Posterior cingulate gyrus (tissue), 11 donors: ENCODE measurements at regions of chr18 and their contacts with region 1.

Region 1: DNA sequence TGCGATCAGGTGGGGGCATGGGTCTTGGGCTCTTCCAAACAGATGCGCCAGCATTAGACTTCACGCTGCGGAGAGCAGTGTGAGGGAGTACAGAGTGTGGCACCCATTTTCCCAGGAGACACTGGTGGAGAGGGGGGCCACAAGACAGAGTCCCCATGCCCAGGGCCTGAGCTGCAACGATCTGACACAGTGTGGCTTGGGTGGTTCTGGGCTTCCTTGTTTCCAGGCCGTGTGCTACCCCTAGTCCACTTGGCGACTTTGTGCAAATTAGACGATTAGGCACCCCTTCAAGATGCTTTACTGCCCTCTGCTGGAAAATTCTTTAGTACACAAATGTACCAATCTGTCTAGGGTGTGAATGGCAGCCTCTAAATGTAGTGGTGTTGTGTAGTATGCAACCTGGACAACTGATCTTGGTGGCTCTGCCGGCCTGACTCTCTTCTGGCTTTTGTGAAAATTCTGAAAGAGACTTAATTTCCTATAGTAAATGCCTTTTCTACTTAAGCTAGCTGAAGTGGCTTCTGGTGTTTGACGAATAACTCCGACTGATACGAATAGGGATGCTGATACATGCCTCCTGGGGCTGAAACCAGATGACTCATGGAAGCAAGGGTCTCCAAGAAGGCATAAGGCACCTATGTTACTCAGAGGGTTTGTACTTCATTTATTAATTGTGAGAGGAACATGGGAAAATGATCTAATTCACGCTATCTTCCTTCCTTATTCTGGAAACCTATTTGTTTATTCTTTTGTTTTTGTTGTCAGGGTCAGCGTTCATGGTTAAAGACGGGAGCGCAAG is 92.3 kb upstream of the SMAD2 start:
- DNase-seq: peak in 1 of 10 donors; percentile 42

Region 2: GRCh38 chr18:47215554-47216138 is 807.1 kb before region 1 on chr18:
- intact Hi-C with region 1: loop called (anchors 10 kb)
- DNase-seq: peak in 4 of 10 donors; percentile 20 to 86 (median 28)

Region 3: DNA sequence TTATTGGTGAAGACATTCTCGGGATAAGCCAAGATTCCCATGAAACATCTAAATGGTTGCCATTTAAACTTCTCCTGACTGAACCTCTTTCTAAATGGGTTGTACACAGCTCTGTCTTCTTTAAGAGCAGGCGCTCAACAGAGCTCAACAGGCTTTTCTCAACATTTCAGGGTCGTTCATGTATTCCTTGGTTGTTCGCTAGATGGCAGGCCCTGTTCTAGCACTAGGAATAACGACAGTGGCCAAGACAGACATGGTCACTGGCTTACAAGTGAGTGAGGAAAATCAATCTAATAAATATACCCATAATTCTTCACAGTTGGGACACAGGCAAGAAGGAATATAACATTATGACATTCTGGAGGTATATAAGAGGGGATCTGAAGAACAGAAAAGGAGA is 246.8 kb before region 1 on chr18:
- intact Hi-C with region 1: loop called (anchors 1 kb)
- DNase-seq: peak in 2 of 10 donors; percentile 18 to 39

Region 4: DNA sequence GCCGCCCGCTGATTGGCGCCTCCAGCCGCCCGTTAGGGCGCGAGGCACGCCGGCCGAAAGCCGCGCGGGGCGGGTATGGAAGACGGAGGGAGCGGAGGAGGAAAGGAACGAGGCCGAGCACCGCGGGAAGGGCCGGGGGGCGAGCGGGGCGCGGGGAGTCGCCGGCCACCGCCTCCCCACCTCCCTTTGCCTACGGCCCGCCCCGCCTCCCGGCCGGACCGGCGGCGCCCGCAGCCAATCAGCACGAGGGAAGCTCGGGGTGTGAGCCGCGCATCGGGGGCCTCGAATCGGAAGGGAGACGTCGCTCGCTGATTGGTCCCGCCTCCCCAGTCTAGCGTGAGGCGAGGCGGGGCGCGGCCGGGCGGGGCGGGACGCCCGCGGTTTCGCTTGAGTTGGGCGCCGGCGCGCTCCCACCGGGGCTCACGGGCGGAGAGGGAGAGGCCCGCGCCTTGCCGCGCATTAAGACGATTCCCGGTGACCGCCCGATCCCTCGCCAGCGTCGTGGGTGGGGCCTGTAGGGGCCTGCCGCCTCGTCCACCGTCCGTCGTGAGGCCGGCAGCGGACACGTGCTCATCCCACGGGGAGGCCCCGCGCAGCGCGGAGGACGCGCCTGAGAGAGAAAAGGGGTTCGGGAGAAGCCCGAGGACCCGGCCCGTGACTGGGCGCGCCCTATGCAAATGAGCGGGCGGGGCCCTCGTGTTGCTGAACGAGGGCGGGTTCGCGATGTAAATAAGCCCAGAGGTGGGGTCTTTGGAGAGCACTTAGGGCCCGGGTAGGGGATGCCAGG is 91.6 kb before region 1 on chr18:
- intact Hi-C with region 1: loop called (anchors 5 kb)
- DNase-seq: peak; percentile 94 to 100 (median 98)

Region 5: DNA sequence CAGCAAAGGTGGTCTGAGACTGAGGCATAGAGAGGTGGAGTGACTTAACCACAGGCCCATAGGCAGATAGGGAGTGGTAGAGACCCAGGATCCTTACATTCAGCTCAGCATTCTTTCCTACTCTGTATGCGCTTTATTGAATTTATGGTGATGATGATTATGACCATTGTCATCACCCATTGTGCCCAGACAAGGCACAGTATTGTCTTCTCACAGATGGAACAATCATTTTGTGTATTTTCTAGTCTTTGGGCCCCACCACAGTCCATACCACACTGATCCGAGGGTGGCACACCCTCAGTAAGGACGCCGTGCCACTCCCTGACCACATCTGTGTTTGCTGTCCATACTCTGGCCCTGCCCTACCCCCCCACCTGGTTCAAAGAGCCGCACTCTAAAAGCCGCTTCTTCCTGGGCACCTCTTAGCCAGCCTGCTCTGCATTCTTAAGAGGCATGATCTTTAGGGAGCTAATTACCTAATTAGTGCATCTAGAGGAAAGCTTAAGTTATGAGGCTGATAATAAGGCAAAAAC is 87.3 kb after region 1 on chr18:
- intact Hi-C with region 1: no loop called
- DNase-seq: no peak

Region 6: DNA sequence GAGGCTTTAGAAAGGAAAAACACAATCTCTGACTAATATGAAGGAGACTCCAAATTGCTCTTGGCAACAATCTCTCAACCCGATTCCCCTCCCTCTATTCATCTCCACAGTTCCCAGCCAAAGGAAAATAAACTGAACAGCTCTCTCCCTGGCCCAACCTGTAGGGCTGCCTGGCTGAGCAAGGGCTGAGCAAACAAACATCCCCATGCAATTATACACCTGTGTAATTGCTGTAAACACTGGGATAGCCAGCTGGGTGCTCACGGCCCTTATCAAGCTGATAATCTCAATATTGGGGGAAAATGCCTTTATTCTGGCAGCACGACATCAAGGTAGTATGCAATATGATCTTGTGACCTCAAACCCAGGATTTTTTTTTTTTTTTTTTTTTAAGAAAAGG is 111.0 kb after region 1 on chr18:
- intact Hi-C with region 1: no loop called
- DNase-seq: peak in 1 of 10 donors; percentile 52